ENCODE measurements at regions of chr2 and their contacts with region 1.

Region 1: GRCh38 chr2:58834404-58834803 is 593.3 kb upstream of the FANCL start:
- DNase-seq: no peak
- H3K4me3 ChIP-seq: no peak overlapping the region
- H3K27ac ChIP-seq: no peak overlapping the region
- H3K27me3 ChIP-seq: no peaks in the 10 kb centered on the region
- CTCF ChIP-seq: no peak

Region 2: DNA sequence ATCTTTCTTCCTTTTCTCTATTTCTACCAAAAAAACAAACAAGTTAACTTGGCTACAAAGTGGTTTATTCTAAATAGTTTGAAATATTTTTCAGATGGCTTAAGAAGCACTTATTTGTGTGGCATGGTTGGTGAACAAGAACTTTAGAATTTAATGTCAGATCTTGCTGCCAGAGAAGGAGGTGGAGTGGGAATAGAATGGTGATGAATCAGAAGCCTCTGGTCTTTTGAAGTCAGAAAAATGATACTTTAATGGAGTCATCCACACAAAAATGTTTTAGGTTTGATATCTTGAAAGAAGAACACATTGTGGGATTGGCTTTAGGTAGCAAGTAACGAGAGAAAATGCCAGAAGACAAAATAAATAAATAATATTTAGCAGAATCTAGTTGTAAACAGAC is 350.2 kb before region 1 on chr2:
- CTCF ChIA-PET with region 1: no interaction called
- POLR2A ChIA-PET with region 1: no interaction called
- DNase-seq: no peak
- H3K4me3 ChIP-seq: no peak overlapping the region
- H3K27ac ChIP-seq: no peak overlapping the region
- H3K27me3 ChIP-seq: no peaks in the 10 kb centered on the region
- CTCF ChIP-seq: no peak

Region 3: GRCh38 chr2:58866040-58866439 is 31.6 kb after region 1 on chr2:
- CTCF ChIA-PET with region 1: interaction called, 10 read pairs
- POLR2A ChIA-PET with region 1: no interaction called
- DNase-seq: no peak
- H3K4me3 ChIP-seq: no peak overlapping the region
- H3K27ac ChIP-seq: no peak overlapping the region
- H3K27me3 ChIP-seq: no peaks in the 10 kb centered on the region
- CTCF ChIP-seq: no peak